Heart right ventricle (tissue), 16 donors: ENCODE measurements at regions of chr12 and their contacts with region 1.

Region 1: DNA sequence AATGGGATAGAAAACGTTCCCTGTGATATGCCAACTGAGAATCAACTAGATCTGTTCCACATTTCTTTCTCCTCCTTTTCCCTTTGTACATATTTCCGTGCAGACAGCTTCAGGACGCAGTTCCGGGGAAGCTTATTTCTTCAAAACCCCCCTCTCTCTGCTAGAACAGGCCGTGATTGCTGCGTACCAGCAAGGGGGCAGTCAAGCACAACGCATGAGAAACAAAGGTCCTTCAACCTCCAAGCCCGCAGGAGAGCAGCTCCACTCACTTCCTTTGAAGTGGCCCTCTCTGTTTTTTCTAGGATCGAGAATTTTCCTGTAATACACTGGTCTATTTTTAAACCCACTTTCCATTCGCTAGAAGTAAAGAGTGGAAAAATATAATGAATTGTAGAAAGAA is 80.8 kb downstream of the ZNF664 start:
- DNase-seq: peak; percentile 34 to 66
- ATAC-seq: peak; percentile 79 to 92 (median 92)
- H3K4me3 ChIP-seq: no peak overlapping the region
- H3K27ac ChIP-seq: no peak overlapping the region
- H3K4me1 ChIP-seq: peaks cover 0 to 19% (median 6%) of the 10 kb centered on the region in 9 donors
- H3K27me3 ChIP-seq: no peaks in the 10 kb centered on the region
- CTCF ChIP-seq: peak; percentile 39 to 85 (median 70)

Region 2: DNA sequence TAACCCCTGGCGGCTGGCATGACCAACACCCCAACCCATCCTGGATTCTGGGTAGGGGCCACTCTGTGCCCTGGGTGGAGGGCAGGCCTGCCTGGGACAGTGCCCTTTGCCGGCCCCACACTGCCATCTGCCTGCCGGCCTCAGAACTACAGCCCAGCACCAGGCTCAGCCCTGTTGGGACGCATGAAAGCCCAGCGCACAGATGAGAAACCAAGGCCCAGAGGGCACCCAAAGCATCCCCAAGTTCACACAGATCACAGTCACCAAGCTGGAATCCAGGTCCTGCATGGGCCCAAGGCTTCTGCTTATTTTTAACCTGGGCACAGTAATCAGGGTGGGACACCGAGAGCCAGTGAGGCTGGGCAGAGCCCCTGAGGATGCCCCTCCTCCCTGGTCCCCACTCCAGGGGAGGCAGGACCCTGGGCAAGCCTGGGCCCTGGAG is 267.2 kb after region 1 on chr12:
- intact Hi-C with region 1: loop called (anchors 1 to 5 kb)
- DNase-seq: peak; percentile 57 to 79
- ATAC-seq: peak; percentile 70 to 88 (median 82)
- H3K4me3 ChIP-seq: no peak overlapping the region
- H3K27ac ChIP-seq: no peak overlapping the region
- H3K4me1 ChIP-seq: peaks cover 0 to 7% (median 0%) of the 10 kb centered on the region in 9 donors
- H3K27me3 ChIP-seq: no peaks in the 10 kb centered on the region
- CTCF ChIP-seq: peak; percentile 79 to 97 (median 93)

Region 3: DNA sequence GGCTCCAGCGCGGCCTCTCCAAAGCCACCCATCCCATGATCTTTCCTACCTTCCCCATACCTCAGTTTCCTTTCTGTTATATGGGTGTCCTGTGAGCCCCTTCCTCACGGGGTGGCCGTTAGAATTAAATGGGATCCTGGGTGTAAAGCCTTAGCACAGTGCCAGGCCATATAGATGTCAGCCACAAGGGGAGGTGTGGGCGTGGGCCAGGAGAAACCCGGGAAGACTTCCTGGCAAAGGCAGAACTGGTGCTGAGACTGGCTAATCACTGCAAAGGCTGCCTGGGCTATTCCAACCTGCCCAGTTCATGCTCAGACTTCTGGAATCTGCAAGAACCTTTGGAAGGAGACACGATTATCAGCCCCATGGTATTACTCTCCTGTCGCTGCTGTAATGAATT is 524.6 kb after region 1 on chr12:
- intact Hi-C with region 1: loop called in 1 of 10 experiments (anchors 10 kb)
- DNase-seq: no peak
- ATAC-seq: no peak
- H3K4me3 ChIP-seq: no peak overlapping the region
- H3K27ac ChIP-seq: no peak overlapping the region
- H3K4me1 ChIP-seq: peaks cover 3 to 17% (median 10%) of the 10 kb centered on the region in 9 donors
- H3K27me3 ChIP-seq: no peaks in the 10 kb centered on the region
- CTCF ChIP-seq: no peak